Activated T-helper 2 cell treated with anti-CD3 and anti-CD28 coated beads, Interferon-gamma antibody, Interleukin-2, Interleukin-4, amounts not matched to agents 10 μg/mL and 5 μg/mL and 100 μg/mL, durations not matched to agents 14 hours and 24 hours and 36 hours (primary cell): ENCODE measurements at regions of chr6 and their contacts with region 1.

Region 1: DNA sequence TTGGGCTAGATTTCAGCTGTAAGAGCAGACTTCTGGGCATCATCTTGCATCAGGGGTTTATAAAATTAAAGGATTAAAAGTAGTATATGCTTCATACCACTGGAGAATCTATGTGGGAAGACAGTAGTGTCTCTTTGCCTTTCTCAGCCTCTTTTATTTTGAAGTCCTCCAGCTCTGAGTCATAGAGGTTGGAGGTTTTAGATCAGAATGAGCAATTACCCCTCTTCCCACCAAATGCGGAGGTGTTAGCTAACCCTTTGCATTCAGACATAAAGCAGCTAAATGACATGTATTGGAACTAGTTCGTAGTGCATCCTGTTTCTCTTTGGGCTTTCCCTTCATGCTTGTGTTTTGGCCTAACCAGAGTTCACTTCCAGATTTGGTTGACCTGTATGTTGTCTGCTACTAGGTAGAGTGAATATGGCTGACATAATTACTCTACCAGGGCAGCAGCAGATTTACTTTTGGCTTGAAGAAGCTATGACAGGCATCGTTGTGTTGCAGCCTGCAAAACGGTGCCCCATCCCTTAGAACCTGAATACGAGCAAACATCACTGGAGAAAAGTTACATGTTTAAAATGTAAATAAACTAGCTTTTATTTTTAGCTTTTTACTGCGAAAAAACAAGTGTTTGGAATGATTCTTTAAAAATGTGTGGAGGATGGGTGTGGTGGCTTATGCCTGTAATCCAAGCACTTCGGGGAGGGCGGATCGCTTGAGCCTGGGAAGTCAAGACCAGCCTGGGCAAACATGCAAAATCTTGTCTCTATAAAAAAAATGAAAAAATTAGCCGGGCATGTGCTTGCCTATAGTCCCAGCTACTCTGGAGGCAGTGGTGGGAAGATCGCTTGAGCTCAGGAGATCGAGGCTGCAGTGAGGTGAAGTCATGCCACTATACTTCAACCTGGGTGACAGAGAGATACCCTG is 82.2 kb downstream of the MYO6 start:
- DNase-seq: no peak
- H3K4me3 Mint-ChIP-seq: no peak overlapping the region
- H3K27ac Mint-ChIP-seq: no peak overlapping the region
- H3K4me1 Mint-ChIP-seq: peaks cover 7% of the 10 kb centered on the region
- H3K27me3 Mint-ChIP-seq: peaks cover 4% of the 10 kb centered on the region

Region 2: GRCh38 chr6:75611702-75612375 is 219.4 kb before region 1 on chr6:
- intact Hi-C with region 1: loop called (anchors 5 kb)
- DNase-seq: no peak
- H3K4me3 Mint-ChIP-seq: peak overlapping the region; percentile 7
- H3K27ac Mint-ChIP-seq: peak overlapping the region; percentile 81
- H3K4me1 Mint-ChIP-seq: peaks cover 62% of the 10 kb centered on the region
- H3K27me3 Mint-ChIP-seq: no peaks in the 10 kb centered on the region

Region 3: GRCh38 chr6:75752365-75752764 is 78.9 kb before region 1 on chr6:
- intact Hi-C with region 1: loop called (anchors 5 kb)
- DNase-seq: no peak
- H3K4me3 Mint-ChIP-seq: no peak overlapping the region
- H3K27ac Mint-ChIP-seq: no peak overlapping the region
- H3K4me1 Mint-ChIP-seq: peaks cover 8% of the 10 kb centered on the region
- H3K27me3 Mint-ChIP-seq: peaks cover 42% of the 10 kb centered on the region